ENCODE measurements at regions of chr2 and their contacts with region 1.

Region 1: GRCh38 chr2:70094978-70095719 is 7.9 kb downstream of the PCBP1 start:
- DNase-seq: peak; percentile 94
- H3K4me3 ChIP-seq: peak overlapping the region; percentile 63
- H3K27ac ChIP-seq: peak overlapping the region; percentile 86
- H3K4me1 ChIP-seq: peaks cover 52% of the 10 kb centered on the region
- CTCF ChIP-seq: no peak

Region 2: GRCh38 chr2:70124983-70125480 is 29.9 kb after region 1 on chr2:
- CTCF ChIA-PET with region 1: interaction called, 4 read pairs
- POLR2A ChIA-PET with region 1: interaction called, 30 read pairs
- intact Hi-C with region 1: no loop called
- DNase-seq: peak; percentile 65
- H3K4me3 ChIP-seq: peak overlapping the region; percentile 63
- H3K27ac ChIP-seq: peak overlapping the region; percentile 83
- H3K4me1 ChIP-seq: peaks cover 89% of the 10 kb centered on the region
- CTCF ChIP-seq: no peak

Region 3: DNA sequence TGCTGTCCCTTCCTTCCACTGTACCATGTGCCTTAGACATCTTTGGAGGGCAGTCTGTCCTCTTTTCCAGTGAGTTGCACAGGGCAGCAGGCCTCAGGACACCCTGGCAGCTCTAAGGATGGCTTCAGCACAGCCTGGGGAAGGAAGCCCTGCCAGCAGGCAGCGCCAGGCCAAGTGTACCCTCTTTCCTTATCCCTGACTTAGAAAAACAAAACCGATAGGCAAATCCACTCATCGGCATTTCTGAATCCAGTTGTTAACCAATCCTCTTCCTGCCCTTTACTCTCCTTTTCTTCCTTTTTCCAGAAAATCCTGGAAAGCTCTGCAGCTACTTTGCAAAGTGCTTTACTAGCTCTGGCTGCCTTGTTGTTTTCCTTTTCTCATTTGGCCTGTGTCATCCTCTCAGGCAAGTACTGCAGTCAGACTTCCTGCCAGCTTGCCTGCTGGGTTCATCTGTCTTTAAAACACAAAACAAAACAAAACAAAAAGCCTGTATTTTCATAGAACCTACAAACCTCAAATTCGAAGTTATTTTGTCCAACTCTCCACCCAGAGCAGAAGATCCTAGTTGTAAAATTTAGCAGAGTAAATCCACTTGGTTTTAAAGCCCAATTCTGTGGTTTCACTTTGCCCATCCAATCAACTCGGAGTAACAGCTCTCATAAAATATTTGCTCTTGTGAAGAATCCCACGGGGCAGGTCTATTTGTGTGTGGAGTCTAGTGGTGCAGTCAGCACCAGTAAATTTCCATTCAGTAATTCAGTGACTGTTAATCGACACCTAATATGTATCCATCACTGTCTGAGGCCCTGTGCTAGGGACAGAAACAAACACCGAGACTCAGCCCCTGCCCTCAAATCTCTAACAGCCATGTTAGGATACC is 37.3 kb after region 1 on chr2:
- CTCF ChIA-PET with region 1: interaction called, 3 read pairs
- POLR2A ChIA-PET with region 1: interaction called, 26 read pairs
- intact Hi-C with region 1: no loop called
- DNase-seq: peak; percentile 73
- H3K4me3 ChIP-seq: peak overlapping the region; percentile 67
- H3K27ac ChIP-seq: peak overlapping the region; percentile 93
- H3K4me1 ChIP-seq: peaks cover 80% of the 10 kb centered on the region
- CTCF ChIP-seq: 0 out of 2 replicates have a peak, but pooled peaks have one; percentile 22